K562 (cell line): ENCODE measurements at regions of chr6 and their contacts with region 1.

Region 1: GRCh38 chr6:26065952-26066380 is 21.3 kb upstream of the HFE start:
- DNase-seq: peak; percentile 80 to 91 (median 84)
- ATAC-seq: peak; percentile 91
- H3K4me3 ChIP-seq: no peak overlapping the region
- H3K27ac ChIP-seq: peak overlapping the region; percentile 70
- H3K4me1 ChIP-seq: peaks cover under 1 to 6% of the 10 kb centered on the region in 2 experiments; a peak in 2 of 5 replicates
- H3K27me3 ChIP-seq: no peaks in the 10 kb centered on the region
- CTCF ChIP-seq: peak; percentile 89 to 98 (median 93)
- EP300 ChIP-seq: peak; percentile 32; the same call in 1 of the 2 replicates
- POLR2A ChIP-seq: no peak
- RAD21 ChIP-seq: peak; percentile 99

Region 2: GRCh38 chr6:26097268-26097875 is 31.4 kb after region 1 on chr6:
- CTCF ChIA-PET with region 1: interaction called, 131 read pairs
- POLR2A ChIA-PET with region 1: interaction called, 19 read pairs
- in situ Hi-C with region 1: loop called (anchors 5 kb)
- intact Hi-C with region 1: loop called (anchors 1 kb)
- DNase-seq: peak; percentile 67 to 85 (median 77)
- ATAC-seq: peak; percentile 91
- H3K4me3 ChIP-seq: no peak overlapping the region
- H3K27ac ChIP-seq: no peak overlapping the region
- H3K4me1 ChIP-seq: peaks cover 0 to 8% of the 10 kb centered on the region in 2 experiments; a peak in 2 of 5 replicates
- H3K27me3 ChIP-seq: no peaks in the 10 kb centered on the region
- CTCF ChIP-seq: peak; percentile 80 to 87 (median 85)
- EP300 ChIP-seq: no peak
- POLR2A ChIP-seq: no peak
- RAD21 ChIP-seq: peak; percentile 96 to 98

Region 3: DNA sequence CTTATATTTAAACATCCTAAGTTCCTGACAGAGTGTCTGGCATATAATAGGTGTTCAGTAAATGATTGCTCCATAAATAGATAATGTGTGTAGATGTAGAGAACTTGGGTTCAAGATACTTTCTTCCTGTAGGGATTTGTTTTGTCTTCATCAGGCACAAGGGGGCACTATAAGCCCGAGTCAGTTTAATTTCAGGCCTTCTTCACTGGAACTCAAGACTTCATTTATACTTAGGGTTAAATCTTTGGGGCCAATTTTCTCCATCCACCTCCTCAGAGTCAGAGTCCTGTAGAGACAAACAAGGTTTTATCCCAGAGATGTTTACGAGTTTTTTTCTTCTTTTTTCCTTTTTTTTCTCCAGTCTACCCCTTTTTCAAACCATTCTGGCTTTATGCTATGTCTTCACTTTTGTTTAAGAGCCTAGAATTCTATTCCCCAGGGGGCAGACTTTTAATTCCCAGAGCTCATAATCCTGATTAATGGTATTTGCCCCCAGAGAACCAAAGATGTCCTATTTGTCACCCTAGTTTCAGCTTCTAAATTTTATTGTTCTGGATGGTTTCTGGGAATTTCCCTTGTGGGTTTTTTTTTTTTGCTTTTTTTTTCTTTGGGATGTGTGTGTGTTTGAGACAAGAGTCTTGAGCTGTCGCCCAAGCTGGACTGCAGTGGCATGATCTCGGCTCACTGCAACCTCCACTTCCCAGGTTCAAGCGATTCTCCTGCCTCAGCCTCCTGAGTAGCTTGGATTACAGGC is 109.6 kb after region 1 on chr6:
- CTCF ChIA-PET with region 1: interaction called, 3 read pairs
- POLR2A ChIA-PET with region 1: no interaction called
- in situ Hi-C with region 1: no loop called
- intact Hi-C with region 1: loop called (anchors 5 kb)
- DNase-seq: peak; percentile 60 to 88 (median 71)
- ATAC-seq: peak; percentile 41
- H3K4me3 ChIP-seq: no peak overlapping the region
- H3K27ac ChIP-seq: no peak overlapping the region
- H3K4me1 ChIP-seq: peaks cover 14% of the 10 kb centered on the region in 2 experiments
- H3K27me3 ChIP-seq: no peaks in the 10 kb centered on the region
- CTCF ChIP-seq: peak; percentile 59 to 87 (median 77)
- EP300 ChIP-seq: no peak; the same call in 1 of the 2 replicates
- POLR2A ChIP-seq: no peak
- RAD21 ChIP-seq: peak; percentile 87 to 88